Testis (tissue), 5 donors: ENCODE measurements at regions of chr20 and their contacts with region 1.

Region 1: DNA sequence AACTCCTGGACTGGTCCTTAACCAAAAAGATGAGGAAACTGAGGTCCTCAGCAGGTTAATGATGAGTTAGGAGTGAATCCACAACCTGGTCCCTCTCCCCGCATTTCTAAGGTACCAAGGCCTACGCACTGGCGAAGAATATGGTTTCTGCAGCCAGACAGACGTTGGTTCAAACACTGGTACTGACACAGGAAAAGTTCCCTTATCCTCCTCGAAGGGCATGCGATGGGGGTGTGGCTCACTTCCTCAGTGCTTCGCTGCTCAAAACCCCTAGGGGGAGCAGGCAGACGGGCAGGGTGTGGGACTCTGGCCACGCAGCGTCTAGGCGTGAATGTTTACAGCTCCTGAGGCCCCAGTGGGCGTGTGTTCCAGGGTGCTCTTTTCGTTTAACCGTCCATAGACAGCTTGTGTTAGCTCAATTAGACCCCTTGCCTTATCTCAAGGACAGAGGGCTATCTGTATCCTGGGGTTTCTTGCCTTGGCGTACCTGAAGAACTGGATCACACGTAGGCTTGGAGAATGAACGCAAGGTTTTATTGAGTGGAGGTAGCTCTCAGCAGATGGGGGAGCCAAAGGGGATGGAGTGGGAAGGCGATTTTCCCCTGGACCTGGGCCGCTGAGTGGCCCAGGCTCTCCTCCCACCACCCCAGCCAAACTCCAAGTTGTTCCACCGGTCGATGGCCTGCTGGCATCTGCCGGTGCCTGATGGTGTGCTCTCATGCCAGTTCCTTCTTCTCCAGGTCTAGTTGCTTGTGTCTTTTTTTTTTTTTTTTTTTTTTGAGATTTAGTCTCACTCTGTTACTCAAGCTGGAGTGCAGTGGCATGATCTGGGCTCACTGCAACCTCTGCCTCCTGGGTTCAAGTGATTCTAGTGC is 31.8 kb upstream of the PTPN1 start:
- DNase-seq: peak; percentile 66
- H3K4me3 ChIP-seq: no peak overlapping the region
- H3K27ac ChIP-seq: no peak overlapping the region
- H3K4me1 ChIP-seq: peaks cover 10% of the 10 kb centered on the region
- H3K27me3 ChIP-seq: no peaks in the 10 kb centered on the region
- CTCF ChIP-seq: peak in 2 of 3 experiments; percentile 35 to 39
- POLR2A ChIP-seq: no peak

Region 2: DNA sequence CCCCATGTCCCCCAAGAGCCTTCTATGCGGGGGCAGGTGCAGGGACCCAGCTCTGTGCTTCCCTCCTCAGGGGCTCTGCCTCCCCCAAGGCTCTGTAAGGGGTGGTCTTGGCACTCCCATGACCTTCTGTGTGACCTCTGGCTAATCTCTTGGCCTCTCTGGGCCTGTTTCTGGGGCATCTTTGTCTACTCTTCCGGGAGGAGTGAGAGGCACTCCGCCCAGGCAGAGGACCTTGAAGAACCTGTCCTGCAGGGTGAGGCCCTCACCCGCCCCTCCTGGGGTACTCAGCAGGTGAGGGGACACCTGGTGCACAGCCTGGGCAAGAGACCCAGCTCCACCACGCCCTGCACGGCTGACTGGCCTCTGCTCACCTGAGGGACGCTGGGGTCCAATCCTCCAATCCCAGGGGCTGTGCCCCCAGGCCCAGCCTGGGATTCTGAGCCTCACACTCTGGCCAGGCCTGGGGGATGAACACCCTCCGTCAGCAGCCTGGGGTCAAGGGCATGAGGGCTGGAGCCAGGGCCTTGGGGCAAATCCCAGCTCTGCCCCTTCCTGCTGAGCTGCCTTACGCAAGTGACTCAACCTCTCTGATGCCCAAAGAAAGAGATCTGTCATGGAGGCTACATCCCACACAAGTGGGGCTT is 118.2 kb before region 1 on chr20:
- intact Hi-C with region 1: no loop called
- DNase-seq: no peak
- H3K4me3 ChIP-seq: no peak overlapping the region
- H3K27ac ChIP-seq: no peak overlapping the region
- H3K4me1 ChIP-seq: no peaks in the 10 kb centered on the region
- H3K27me3 ChIP-seq: no peaks in the 10 kb centered on the region
- CTCF ChIP-seq: no peak
- POLR2A ChIP-seq: no peak

Region 3: DNA sequence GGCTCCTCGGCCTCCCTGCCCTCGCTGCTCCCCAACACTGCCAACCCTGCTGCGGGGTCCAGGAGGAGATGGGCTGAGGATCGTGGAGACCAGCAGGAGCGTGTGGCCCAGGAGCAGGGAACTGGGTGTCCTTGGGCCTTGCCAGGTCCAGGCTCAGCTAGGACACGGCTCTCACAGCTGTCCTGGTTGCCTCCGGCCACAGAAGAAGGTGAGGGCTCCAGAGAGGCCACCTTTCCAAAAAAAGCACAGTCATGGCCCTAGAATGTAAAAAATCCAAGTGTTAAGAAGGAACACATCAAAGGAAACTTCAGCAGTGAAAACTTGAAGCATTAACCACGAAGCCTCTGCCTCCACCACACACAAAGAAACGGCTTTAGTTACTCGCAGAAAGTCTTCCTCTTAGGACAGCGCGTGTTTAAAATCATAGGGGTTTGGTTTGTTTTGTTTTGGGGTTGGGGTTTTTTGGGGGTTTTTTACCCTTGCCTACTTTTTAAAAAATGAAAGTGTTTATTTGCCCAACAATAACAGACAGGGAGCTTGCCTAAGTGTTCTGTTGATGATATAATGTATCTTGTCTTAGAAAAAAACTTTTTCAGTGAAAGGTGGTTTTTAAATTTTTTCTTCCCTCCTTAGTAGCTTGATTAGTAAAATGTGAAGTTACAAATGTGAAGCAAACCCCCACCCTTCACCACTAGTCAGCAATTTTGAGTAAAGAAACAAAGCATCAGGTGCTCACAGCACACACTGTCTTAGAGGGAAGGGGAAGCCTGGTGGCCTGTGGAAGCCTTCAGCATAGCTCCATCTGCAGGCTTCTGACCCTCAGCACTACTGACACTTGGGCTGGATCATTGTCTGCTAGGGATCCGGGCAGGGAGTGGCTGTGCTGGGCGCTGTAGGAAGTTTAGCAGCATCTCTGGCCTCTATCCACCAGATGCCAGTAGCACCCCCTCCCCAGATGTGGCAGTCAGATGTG is 91.8 kb after region 1 on chr20:
- intact Hi-C with region 1: loop called (anchors 5 kb)
- DNase-seq: peak; percentile 65
- H3K4me3 ChIP-seq: no peak overlapping the region
- H3K27ac ChIP-seq: peak overlapping the region; percentile 10 to 62
- H3K4me1 ChIP-seq: peaks cover 22% of the 10 kb centered on the region
- H3K27me3 ChIP-seq: no peaks in the 10 kb centered on the region
- CTCF ChIP-seq: peak in 2 of 3 experiments; percentile 15 to 43
- POLR2A ChIP-seq: no peak